Right ventricle myocardium inferior (tissue), 1 donor: ENCODE measurements at regions of chr11 and their contacts with region 1.

Region 1: GRCh38 chr11:45025716-45026492 is 75.2 kb upstream of the TP53I11 start:
- DNase-seq: peak; percentile 72
- ATAC-seq: peak; percentile 33

Region 2: GRCh38 chr11:44709966-44710365 is 315.9 kb before region 1 on chr11:
- intact Hi-C with region 1: no loop called
- DNase-seq: no peak
- ATAC-seq: no peak

Region 3: GRCh38 chr11:45089676-45090499 is 64.0 kb after region 1 on chr11:
- intact Hi-C with region 1: loop called (anchors 5 kb)
- DNase-seq: no peak
- ATAC-seq: peak; percentile 7